Heart right ventricle (tissue), 16 donors: ENCODE measurements at regions of chrX and their contacts with region 1.

Region 1: DNA sequence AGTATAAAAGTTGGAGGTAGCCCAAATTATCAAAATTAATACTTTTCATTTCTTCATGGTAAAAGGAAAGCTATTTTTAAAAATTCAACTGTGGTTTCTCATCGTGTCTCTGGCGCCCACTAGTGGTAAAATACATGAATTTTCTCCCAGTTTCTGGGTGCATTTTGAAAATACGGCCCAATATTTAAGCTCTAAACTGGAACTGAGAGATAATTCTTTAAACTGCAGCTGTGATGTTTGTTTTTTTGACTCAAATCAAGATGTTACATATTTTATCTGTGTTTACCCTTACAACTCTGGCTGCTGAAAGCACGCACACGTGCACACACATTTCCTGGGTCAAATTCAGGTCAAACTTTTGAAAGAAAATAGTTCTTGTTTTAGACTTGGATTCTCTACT is 123.9 kb upstream of the ACSL4 start:
- DNase-seq: no peak
- ATAC-seq: no peak
- H3K4me3 ChIP-seq: peak overlapping the region in 1 of 10 donors; percentile 13
- H3K27ac ChIP-seq: peak overlapping the region in 7 of 10 donors; percentile 25 to 65 (median 60)
- H3K4me1 ChIP-seq: peaks cover 0 to 24% (median 5%) of the 10 kb centered on the region in 9 donors
- H3K27me3 ChIP-seq: peaks cover 0 to 20% (median 0%) of the 10 kb centered on the region in 7 donors
- CTCF ChIP-seq: peak; percentile 47 to 82 (median 72)

Region 2: DNA sequence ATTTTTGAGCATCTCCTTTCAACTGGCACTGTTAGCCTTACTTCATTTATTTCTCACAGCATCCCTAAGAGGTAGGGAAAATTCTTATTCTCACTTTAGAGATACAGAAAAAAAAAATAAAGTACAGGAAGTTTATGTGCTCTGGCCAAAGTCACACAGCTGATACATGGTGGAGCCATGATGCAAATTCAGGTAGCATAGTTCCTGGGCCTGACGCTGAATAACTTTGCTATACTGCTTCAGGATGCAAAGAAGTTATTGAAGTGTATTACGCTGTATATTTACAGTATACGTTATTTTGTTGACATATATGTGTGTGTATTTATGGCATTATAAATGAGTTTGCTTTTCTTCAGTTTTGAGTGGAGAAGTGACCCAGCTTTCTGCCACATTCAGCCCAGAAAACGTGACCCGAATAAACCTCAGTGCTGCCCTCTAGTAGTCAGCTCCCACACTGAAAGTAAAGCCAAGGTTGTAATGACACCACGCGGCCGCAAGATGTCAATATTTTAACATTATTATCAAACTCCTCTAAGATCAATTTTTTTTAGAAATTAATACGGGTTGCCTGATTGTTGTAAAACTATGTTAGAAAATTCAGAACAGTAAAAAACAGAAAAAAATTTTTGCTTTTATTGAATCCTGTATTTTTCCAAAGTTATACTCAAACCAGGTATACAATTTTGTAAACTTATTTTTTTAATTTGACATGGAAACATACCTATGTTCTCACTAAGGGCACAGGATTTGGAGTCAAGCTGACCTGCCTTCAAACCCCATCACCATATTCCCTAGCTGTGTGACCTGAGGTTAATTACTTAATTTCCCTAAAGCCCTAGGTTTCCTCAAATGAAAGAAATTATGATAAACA is 371.3 kb before region 1 on chrX:
- intact Hi-C with region 1: loop called in 1 of 10 experiments (anchors 10 kb)
- DNase-seq: peak in 1 of 2 donors; percentile 50
- ATAC-seq: peak in 1 of 8 donors; percentile 52
- H3K4me3 ChIP-seq: no peak overlapping the region
- H3K27ac ChIP-seq: no peak overlapping the region
- H3K4me1 ChIP-seq: no peaks in the 10 kb centered on the region
- H3K27me3 ChIP-seq: peaks cover 0 to 44% (median 0%) of the 10 kb centered on the region in 7 donors
- CTCF ChIP-seq: peak; percentile 62 to 98 (median 86)

Region 3: GRCh38 chrX:109536439-109537336 is 320.3 kb before region 1 on chrX and contains the start of gene NXT2:
- intact Hi-C with region 1: loop called in 1 of 10 experiments (anchors 5 kb)
- DNase-seq: peak; percentile 87 to 91
- ATAC-seq: peak; percentile 100
- H3K4me3 ChIP-seq: peak within 1 kb of the TSS; percentile 23 to 75 (median 62)
- H3K27ac ChIP-seq: peak within 1 kb of the TSS; percentile 81 to 95 (median 90)
- H3K4me1 ChIP-seq: peaks cover 0 to 16% (median 4%) of the 10 kb centered on the region in 9 donors
- H3K27me3 ChIP-seq: peaks cover 0 to 11% (median 0%) of the 10 kb centered on the region in 7 donors
- CTCF ChIP-seq: no peak
- total RNA-seq, gene NXT2: 1.2 to 2.7 (median 1.6) TPM

Region 4: DNA sequence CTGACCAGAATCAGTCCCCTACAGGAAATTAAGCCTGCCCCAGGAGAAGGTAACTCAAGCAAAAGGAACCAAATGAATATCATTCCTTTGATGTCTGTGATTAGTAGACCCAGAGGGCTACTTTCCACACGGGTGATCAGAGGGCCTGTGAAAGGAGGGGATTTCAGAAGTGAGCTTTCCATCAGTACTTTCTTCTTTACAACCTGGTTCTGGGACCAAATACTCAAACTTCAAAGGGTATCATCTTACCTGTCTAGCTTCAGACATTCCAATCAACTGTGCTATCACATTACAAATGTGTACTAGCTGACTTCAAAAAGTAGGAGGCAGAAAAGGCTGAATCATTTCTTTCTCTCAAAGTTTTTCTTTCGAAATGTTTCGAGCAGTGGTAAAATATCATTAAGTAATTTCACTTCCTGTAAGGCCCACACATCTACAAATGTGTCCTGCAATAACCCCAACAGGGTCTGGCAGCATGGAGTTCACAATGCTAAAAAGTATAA is 147.8 kb before region 1 on chrX:
- intact Hi-C with region 1: loop called in 8 of 10 experiments (anchors 2 to 10 kb)
- DNase-seq: no peak
- ATAC-seq: peak in 5 of 8 donors; percentile 52 to 70 (median 67)
- H3K4me3 ChIP-seq: no peak overlapping the region
- H3K27ac ChIP-seq: peak overlapping the region in 6 of 10 donors; percentile 19 to 82 (median 64)
- H3K4me1 ChIP-seq: peaks cover 0 to 75% (median 16%) of the 10 kb centered on the region in 9 donors
- H3K27me3 ChIP-seq: peaks cover 0 to 33% (median 0%) of the 10 kb centered on the region in 7 donors
- CTCF ChIP-seq: peak in 1 of 9 donors; percentile 9

Region 5: GRCh38 chrX:109714340-109714958 is 142.5 kb before region 1 on chrX:
- intact Hi-C with region 1: loop called in 9 of 10 experiments (anchors 2 to 10 kb)
- DNase-seq: no peak
- ATAC-seq: no peak
- H3K4me3 ChIP-seq: no peak overlapping the region
- H3K27ac ChIP-seq: no peak overlapping the region
- H3K4me1 ChIP-seq: peaks cover 0 to 74% (median 20%) of the 10 kb centered on the region in 9 donors
- H3K27me3 ChIP-seq: peaks cover 0 to 27% (median 0%) of the 10 kb centered on the region in 7 donors
- CTCF ChIP-seq: no peak

Region 6: GRCh38 chrX:109732780-109733657 is 124.0 kb before region 1 on chrX and contains the start of gene ACSL4:
- intact Hi-C with region 1: loop called in 1 of 10 experiments (anchors 5 kb)
- DNase-seq: peak; percentile 87 to 92
- ATAC-seq: peak; percentile 96 to 100 (median 99)
- H3K4me3 ChIP-seq: peak within 1 kb of the TSS; percentile 75 to 93 (median 84)
- H3K27ac ChIP-seq: peak within 1 kb of the TSS; percentile 29 to 96 (median 90)
- H3K4me1 ChIP-seq: peaks cover 0 to 30% (median 0%) of the 10 kb centered on the region in 9 donors
- H3K27me3 ChIP-seq: peaks cover 0 to 24% (median 0%) of the 10 kb centered on the region in 7 donors
- CTCF ChIP-seq: no peak
- total RNA-seq, gene ACSL4: 28.3 to 69.4 (median 52.1) TPM

Region 7: DNA sequence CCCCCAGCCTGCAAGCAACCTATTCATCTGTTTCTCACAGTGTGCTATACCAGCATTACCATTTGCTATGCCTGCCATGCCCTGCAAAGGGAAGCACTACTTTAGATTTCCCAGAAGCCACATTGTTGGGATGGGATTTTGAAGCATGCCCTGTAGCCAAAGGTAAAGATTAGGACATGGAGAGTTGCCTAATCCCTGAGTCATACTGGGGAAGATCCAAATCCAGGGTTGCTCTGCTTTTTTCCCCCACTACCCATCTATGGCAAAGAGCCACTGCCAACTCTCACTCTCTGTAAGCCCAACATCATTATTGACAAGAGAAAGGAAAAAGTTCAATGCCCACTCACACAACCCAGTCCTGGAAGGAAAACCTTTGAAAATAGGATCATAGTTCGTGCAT is 109.3 kb after region 1 on chrX:
- intact Hi-C with region 1: no loop called
- DNase-seq: no peak
- ATAC-seq: peak in 2 of 8 donors; percentile 53 to 64
- H3K4me3 ChIP-seq: no peak overlapping the region
- H3K27ac ChIP-seq: no peak overlapping the region
- H3K4me1 ChIP-seq: no peaks in the 10 kb centered on the region
- H3K27me3 ChIP-seq: peaks cover 0 to 38% (median 0%) of the 10 kb centered on the region in 7 donors
- CTCF ChIP-seq: no peak

Region 8: DNA sequence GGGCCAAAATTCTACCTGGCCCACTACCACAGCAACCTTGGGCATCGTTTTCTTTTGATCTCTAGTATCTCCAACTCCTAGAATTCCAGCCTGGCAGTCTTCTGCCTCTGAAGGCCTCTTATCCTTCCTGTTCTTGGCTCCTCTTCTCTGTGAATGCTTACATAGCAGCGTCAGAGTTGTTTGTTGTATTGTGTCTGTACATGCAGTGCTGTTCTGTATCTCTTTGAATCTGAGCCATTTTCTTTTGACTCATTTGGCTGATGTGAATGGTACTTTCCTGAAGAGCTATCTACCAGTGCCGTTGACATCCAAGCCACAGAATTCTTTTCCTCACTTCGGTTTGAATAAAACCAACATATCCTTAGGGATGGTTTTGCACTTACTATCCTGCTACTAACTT is 225.2 kb after region 1 on chrX:
- intact Hi-C with region 1: no loop called
- DNase-seq: no peak
- ATAC-seq: peak in 7 of 8 donors; percentile 38 to 91 (median 85)
- H3K4me3 ChIP-seq: no peak overlapping the region
- H3K27ac ChIP-seq: peak overlapping the region in 8 of 10 donors; percentile 15 to 63 (median 31)
- H3K4me1 ChIP-seq: peaks cover 0 to 29% (median 15%) of the 10 kb centered on the region in 9 donors
- H3K27me3 ChIP-seq: peaks cover 0 to 10% (median 0%) of the 10 kb centered on the region in 7 donors
- CTCF ChIP-seq: no peak